IMR-90 (cell line): ENCODE measurements at regions of chr10 and their contacts with region 1.

Region 1: GRCh38 chr10:79374312-79375191 is 27.3 kb downstream of the PPIF start:
- DNase-seq: peak; percentile 67
- ATAC-seq: peak; percentile 79
- H3K4me3 ChIP-seq: no peak overlapping the region
- H3K27ac ChIP-seq: 0 out of 2 replicates have a peak overlapping the region, but pooled peaks have one; percentile 19
- H3K4me1 ChIP-seq: peaks cover 12% of the 10 kb centered on the region
- H3K27me3 ChIP-seq: no peaks in the 10 kb centered on the region
- CTCF ChIP-seq: peak; percentile 92
- POLR2A ChIP-seq: peak; percentile 53; the same call in 1 of the 2 replicates
- RAD21 ChIP-seq: peak; percentile 99

Region 2: GRCh38 chr10:78890506-78890905 is 484.0 kb before region 1 on chr10:
- CTCF ChIA-PET with region 1: no interaction called
- POLR2A ChIA-PET with region 1: no interaction called
- dilution Hi-C with region 1: no loop called
- in situ Hi-C with region 1: no loop called
- intact Hi-C with region 1: no loop called
- DNase-seq: no peak
- ATAC-seq: no peak
- H3K4me3 ChIP-seq: no peak overlapping the region
- H3K27ac ChIP-seq: no peak overlapping the region
- H3K4me1 ChIP-seq: no peaks in the 10 kb centered on the region
- H3K27me3 ChIP-seq: peaks cover 66% of the 10 kb centered on the region
- CTCF ChIP-seq: no peak
- POLR2A ChIP-seq: no peak
- RAD21 ChIP-seq: no peak

Region 3: GRCh38 chr10:79195091-79195923 is 179.2 kb before region 1 on chr10:
- CTCF ChIA-PET with region 1: no interaction called
- POLR2A ChIA-PET with region 1: no interaction called
- dilution Hi-C with region 1: no loop called
- in situ Hi-C with region 1: no loop called
- intact Hi-C with region 1: no loop called
- DNase-seq: peak; percentile 81
- ATAC-seq: peak; percentile 78
- H3K4me3 ChIP-seq: no peak overlapping the region
- H3K27ac ChIP-seq: peak overlapping the region; percentile 76
- H3K4me1 ChIP-seq: peaks cover 35% of the 10 kb centered on the region
- H3K27me3 ChIP-seq: no peaks in the 10 kb centered on the region
- CTCF ChIP-seq: peak; percentile 88
- POLR2A ChIP-seq: peak; percentile 59; the same call in 1 of the 2 replicates
- RAD21 ChIP-seq: peak; percentile 96

Region 4: GRCh38 chr10:79463578-79464496 is 89.3 kb after region 1 on chr10:
- CTCF ChIA-PET with region 1: interaction called, 3 read pairs
- POLR2A ChIA-PET with region 1: no interaction called
- dilution Hi-C with region 1: no loop called
- in situ Hi-C with region 1: no loop called
- intact Hi-C with region 1: loop called (anchors 1 kb)
- DNase-seq: no peak
- ATAC-seq: no peak
- H3K4me3 ChIP-seq: no peak overlapping the region
- H3K27ac ChIP-seq: no peak overlapping the region
- H3K4me1 ChIP-seq: peaks cover 11% of the 10 kb centered on the region
- H3K27me3 ChIP-seq: no peaks in the 10 kb centered on the region
- CTCF ChIP-seq: no peak
- POLR2A ChIP-seq: no peak
- RAD21 ChIP-seq: no peak

Region 5: GRCh38 chr10:79487296-79488194 is 113.0 kb after region 1 on chr10:
- CTCF ChIA-PET with region 1: interaction called, 7 read pairs
- POLR2A ChIA-PET with region 1: no interaction called
- dilution Hi-C with region 1: no loop called
- in situ Hi-C with region 1: loop called (anchors 25 kb)
- intact Hi-C with region 1: loop called (anchors 1 kb)
- DNase-seq: peak; percentile 66
- ATAC-seq: peak; percentile 46
- H3K4me3 ChIP-seq: no peak overlapping the region
- H3K27ac ChIP-seq: peak overlapping the region; percentile 95
- H3K4me1 ChIP-seq: peaks cover 32% of the 10 kb centered on the region
- H3K27me3 ChIP-seq: no peaks in the 10 kb centered on the region
- CTCF ChIP-seq: peak; percentile 54
- POLR2A ChIP-seq: no peak
- RAD21 ChIP-seq: peak; percentile 64

Region 6: DNA sequence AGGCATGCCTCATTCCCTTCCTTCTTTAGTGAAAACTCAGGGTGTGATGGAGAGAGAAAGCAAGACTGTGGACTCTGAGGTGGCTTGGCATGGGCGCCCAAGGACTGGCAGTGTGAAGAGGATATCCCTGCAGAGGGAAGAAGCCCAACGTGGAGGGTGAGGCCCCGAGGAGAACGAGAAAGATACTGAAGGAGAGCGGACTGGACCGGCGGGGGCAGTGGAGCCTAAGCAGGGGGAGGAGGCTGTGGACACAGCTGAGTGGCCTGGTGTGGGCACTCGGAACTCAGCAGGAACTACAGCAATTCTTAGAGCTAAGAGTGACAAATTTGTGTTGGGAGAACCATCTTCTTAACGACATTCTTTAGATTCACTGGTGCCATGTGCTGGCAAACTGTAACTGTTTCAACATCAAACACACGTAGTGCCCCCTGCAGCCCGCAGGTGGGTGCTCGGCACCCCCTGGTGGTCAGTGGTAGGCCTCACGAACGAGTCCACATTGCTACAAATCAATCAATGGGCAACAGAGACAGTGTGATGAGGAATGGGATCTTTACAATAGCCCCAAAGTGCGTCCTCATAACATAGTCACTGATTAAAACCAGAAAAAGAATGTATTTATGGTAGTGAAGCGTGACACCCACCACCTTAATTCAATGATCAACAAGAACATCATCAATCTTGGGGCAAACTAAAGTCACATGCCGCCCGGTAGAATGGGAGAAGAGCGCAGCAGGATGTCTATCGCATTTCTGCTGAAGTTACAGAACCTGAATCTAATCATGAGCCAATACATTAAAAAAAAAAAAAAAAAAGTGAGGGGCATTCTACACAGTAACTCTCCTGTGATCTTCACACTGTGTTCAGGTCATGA is 234.2 kb after region 1 on chr10:
- CTCF ChIA-PET with region 1: no interaction called
- POLR2A ChIA-PET with region 1: no interaction called
- dilution Hi-C with region 1: no loop called
- in situ Hi-C with region 1: loop called (anchors 10 kb)
- intact Hi-C with region 1: loop called (anchors 2 kb)
- DNase-seq: peak; percentile 14
- ATAC-seq: peak; percentile 53
- H3K4me3 ChIP-seq: no peak overlapping the region
- H3K27ac ChIP-seq: no peak overlapping the region
- H3K4me1 ChIP-seq: no peaks in the 10 kb centered on the region
- H3K27me3 ChIP-seq: peaks cover 21% of the 10 kb centered on the region
- CTCF ChIP-seq: peak; percentile 65
- POLR2A ChIP-seq: no peak
- RAD21 ChIP-seq: peak; percentile 67

Region 7: GRCh38 chr10:79929409-79929904 is 554.9 kb after region 1 on chr10:
- CTCF ChIA-PET with region 1: interaction called, 3 read pairs
- POLR2A ChIA-PET with region 1: no interaction called
- dilution Hi-C with region 1: no loop called
- in situ Hi-C with region 1: loop called (anchors 10 kb)
- intact Hi-C with region 1: loop called (anchors 1 kb)
- DNase-seq: peak; percentile 58
- ATAC-seq: peak; percentile 91
- H3K4me3 ChIP-seq: no peak overlapping the region
- H3K27ac ChIP-seq: no peak overlapping the region
- H3K4me1 ChIP-seq: no peaks in the 10 kb centered on the region
- H3K27me3 ChIP-seq: peaks cover 19% of the 10 kb centered on the region
- CTCF ChIP-seq: peak; percentile 91
- POLR2A ChIP-seq: no peak
- RAD21 ChIP-seq: peak; percentile 96